Activated B cell treated with CpG ODN at 0.5 μM for 24 hours (primary cell): ENCODE measurements at regions of chr2 and their contacts with region 1.

Region 1: DNA sequence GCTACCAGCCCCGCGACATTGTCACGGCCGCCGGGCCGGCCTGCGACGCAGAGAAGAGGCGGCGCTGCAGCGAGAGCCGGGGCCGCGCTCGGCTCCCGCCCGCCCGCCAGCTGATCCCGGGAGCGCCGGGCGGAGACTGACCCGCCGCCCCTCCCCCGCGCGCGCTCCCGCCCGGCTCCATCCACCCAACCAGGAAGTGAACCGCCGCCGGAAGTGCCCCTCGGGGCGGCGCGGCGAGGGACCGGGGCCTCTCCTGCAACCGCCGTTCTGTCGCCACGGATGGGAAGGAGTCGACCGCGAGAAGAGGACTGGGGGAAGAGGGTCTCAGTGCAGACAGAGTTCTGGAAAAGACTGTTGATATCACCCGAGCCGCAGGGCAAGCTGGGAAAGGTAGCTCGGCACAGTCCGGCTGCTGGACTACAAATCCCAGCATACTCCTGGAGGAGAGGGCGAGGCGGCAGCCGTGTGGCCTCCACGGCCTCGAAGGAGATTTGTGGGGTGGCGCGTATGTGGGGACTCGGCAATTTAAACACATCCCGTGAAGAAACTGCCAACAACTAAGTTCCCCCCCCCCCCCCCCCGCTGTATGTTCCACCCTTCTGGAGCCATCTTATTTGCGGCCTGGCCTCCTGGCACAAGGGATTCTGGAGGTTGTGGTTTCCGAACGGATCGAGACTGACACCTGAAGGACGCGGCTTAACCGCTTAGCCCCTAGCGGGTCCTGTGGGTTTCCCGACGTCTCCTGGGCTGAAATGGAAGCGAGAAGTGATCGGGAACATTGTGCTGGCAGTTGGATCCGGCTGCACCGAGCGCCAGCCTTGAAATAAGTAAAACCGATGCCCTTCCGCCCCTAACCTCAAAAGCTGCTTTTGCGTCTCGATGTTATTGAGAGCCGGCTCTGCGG is at the start of gene AAK1:
- DNase-seq: peak; percentile 85
- ATAC-seq: peak; percentile 70
- H3K4me3 Mint-ChIP-seq: peak within 1 kb of the TSS; percentile 97
- H3K27ac Mint-ChIP-seq: peak within 1 kb of the TSS; percentile 91
- H3K4me1 Mint-ChIP-seq: peaks cover 45% of the 10 kb centered on the region
- H3K27me3 Mint-ChIP-seq: peaks cover 64% of the 10 kb centered on the region
- CTCF ChIP-seq: no peak
- total RNA-seq, gene AAK1: 4.7 and 5.6 TPM in 2 replicates

Region 2: GRCh38 chr2:68330691-68331090 is 1313.2 kb before region 1 on chr2:
- CTCF ChIA-PET with region 1: no interaction called
- POLR2A ChIA-PET with region 1: no interaction called
- intact Hi-C with region 1: no loop called
- DNase-seq: no peak
- ATAC-seq: no peak
- H3K4me3 Mint-ChIP-seq: no peak overlapping the region
- H3K27ac Mint-ChIP-seq: no peak overlapping the region
- H3K4me1 Mint-ChIP-seq: no peaks in the 10 kb centered on the region
- H3K27me3 Mint-ChIP-seq: peaks cover 10% of the 10 kb centered on the region
- CTCF ChIP-seq: no peak

Region 3: GRCh38 chr2:69375494-69376353 is 268.1 kb before region 1 on chr2:
- CTCF ChIA-PET with region 1: no interaction called
- POLR2A ChIA-PET with region 1: interaction called, 11 read pairs
- intact Hi-C with region 1: no loop called
- DNase-seq: no peak
- ATAC-seq: no peak
- H3K4me3 Mint-ChIP-seq: no peak overlapping the region
- H3K27ac Mint-ChIP-seq: no peak overlapping the region
- H3K4me1 Mint-ChIP-seq: peaks cover 8% of the 10 kb centered on the region
- H3K27me3 Mint-ChIP-seq: no peaks in the 10 kb centered on the region
- CTCF ChIP-seq: no peak

Region 4: GRCh38 chr2:69436938-69437750 is 206.7 kb before region 1 on chr2 and contains the start of gene NFU1:
- CTCF ChIA-PET with region 1: no interaction called
- POLR2A ChIA-PET with region 1: interaction called, 25 read pairs
- intact Hi-C with region 1: loop called (anchors 2 kb)
- DNase-seq: peak; percentile 85
- ATAC-seq: peak; percentile 95
- H3K4me3 Mint-ChIP-seq: peak within 1 kb of the TSS; percentile 96
- H3K27ac Mint-ChIP-seq: peak within 1 kb of the TSS; percentile 93
- H3K4me1 Mint-ChIP-seq: peaks cover 34% of the 10 kb centered on the region
- H3K27me3 Mint-ChIP-seq: no peaks in the 10 kb centered on the region
- CTCF ChIP-seq: no peak
- total RNA-seq, gene NFU1: 24.3 and 31.1 TPM in 2 replicates

Region 5: DNA sequence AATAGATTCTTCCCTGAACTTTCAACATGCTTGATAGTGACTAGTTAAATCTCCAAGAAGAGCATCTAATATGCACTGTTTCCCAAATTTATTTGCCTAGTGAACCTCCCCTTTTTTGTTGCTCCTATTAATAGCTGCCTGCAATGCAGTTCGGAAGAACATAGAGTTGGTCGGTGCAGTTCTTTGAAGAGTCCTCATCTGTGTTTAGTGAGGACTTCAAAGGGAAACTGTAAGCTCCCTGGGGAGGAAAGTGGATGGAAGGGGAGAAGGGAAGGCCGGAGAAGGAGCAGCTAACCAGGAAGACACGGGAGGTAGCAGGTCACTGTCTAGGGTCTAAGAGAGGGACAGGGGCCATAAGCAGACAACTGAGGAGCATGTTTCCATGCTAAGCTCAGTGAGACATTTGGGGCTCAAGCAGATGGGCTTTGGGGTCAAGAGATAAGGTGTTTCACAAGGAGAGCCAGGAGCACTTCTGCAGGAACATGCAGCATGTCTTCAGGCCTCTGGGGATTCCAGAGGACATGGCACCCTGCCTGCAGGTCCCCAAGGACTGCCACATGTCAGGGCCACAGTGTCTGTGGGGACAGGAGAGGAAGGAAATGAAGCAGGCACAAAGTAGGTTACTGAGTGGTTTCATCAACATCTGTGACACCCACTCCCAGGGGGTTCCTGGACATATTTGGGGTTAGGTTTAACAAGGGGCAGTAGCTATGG is 49.4 kb after region 1 on chr2:
- CTCF ChIA-PET with region 1: no interaction called
- POLR2A ChIA-PET with region 1: interaction called, 5 read pairs
- intact Hi-C with region 1: loop called (anchors 1 kb)
- DNase-seq: peak; percentile 54
- ATAC-seq: peak; percentile 94
- H3K4me3 Mint-ChIP-seq: peak overlapping the region; percentile 33
- H3K27ac Mint-ChIP-seq: peak overlapping the region; percentile 57
- H3K4me1 Mint-ChIP-seq: peaks cover 28% of the 10 kb centered on the region
- H3K27me3 Mint-ChIP-seq: peaks cover 41% of the 10 kb centered on the region
- CTCF ChIP-seq: no peak

Region 6: DNA sequence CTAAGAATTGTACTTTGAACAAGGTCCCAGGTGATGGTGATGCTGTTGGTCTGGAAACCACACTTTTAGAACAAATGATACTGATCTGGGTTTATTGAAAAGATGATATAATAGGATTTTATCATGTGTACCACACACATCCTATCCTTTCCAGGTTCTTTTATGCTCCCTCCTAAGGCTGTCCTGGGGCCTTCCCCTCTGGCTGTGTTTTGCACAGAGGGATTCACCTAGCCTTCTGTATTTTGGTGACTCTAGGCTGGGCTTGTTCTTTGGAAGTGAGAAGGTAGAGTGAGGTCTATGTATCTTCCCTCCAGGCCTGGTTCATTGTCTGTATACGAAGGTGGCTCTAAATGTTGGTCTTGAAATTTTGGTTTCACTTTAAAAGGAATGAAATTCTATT is 110.8 kb after region 1 on chr2:
- CTCF ChIA-PET with region 1: no interaction called
- POLR2A ChIA-PET with region 1: no interaction called
- intact Hi-C with region 1: no loop called
- DNase-seq: no peak
- ATAC-seq: no peak
- H3K4me3 Mint-ChIP-seq: no peak overlapping the region
- H3K27ac Mint-ChIP-seq: no peak overlapping the region
- H3K4me1 Mint-ChIP-seq: peaks cover 23% of the 10 kb centered on the region
- H3K27me3 Mint-ChIP-seq: no peaks in the 10 kb centered on the region
- CTCF ChIP-seq: no peak

Region 7: DNA sequence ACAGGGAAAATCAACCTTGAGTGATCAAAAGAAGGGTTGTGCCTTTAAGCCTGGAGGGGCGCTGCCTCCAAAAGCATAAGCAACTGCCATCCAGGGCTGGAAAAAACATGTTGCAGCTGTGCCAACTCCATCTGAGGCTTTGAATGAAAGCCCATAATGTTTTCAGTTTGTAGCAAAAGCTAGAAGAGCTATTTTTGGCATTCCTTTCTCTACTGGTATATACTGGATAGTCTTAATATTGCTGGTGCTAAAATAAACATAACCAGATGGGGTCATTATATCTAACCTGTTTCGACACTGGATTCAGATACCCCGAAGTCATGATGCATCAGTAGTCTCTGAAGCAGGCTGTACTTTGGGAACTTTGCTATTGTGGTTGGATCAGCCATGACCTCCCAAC is 123.2 kb after region 1 on chr2:
- CTCF ChIA-PET with region 1: no interaction called
- POLR2A ChIA-PET with region 1: no interaction called
- intact Hi-C with region 1: no loop called
- DNase-seq: no peak
- ATAC-seq: no peak
- H3K4me3 Mint-ChIP-seq: no peak overlapping the region
- H3K27ac Mint-ChIP-seq: no peak overlapping the region
- H3K4me1 Mint-ChIP-seq: peaks cover 73% of the 10 kb centered on the region
- H3K27me3 Mint-ChIP-seq: no peaks in the 10 kb centered on the region
- CTCF ChIP-seq: no peak

Region 8: DNA sequence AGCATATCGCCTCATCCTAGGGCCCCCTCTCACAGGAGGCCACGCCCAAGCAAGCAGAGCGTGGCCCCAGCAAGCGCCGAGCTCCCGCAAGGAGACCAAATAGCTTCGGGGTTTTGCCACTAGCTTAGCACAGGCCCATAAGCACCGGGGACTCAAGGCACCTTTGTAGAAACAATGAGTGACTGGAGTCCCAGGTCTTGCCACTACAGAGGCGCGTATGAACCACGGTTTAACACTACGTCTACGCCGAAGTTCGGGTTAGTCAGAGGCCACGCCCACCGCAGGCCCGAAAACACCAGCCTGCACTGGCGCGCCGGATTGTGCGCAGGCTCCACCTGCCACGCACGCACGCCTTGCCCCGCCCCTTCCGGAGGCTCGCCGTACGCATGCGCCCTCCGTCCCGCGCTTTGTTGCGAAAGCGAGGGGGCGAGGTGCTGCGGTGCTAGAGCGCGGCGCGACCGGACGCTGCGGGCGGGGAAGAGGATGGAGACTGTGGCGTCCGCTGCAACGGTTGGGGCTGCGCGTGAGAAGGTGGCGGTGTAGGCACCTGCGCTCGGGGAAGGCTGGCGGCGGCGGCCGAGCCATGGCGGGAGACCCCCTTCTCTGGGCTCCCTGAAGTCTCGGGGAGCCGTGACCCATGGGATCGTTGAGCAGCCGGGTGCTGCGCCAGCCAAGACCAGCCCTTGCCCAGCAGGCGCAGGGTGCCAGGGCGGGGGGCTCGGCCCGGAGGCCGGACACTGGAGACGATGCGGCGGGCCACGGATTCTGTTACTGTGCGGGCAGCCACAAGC is 185.6 kb after region 1 on chr2 and contains the start of gene GMCL1:
- CTCF ChIA-PET with region 1: no interaction called
- POLR2A ChIA-PET with region 1: no interaction called
- intact Hi-C with region 1: loop called (anchors 1 kb)
- DNase-seq: peak; percentile 99
- ATAC-seq: peak; percentile 95
- H3K4me3 Mint-ChIP-seq: peak within 1 kb of the TSS; percentile 94
- H3K27ac Mint-ChIP-seq: peak within 1 kb of the TSS; percentile 96
- H3K4me1 Mint-ChIP-seq: peaks cover 29% of the 10 kb centered on the region
- H3K27me3 Mint-ChIP-seq: no peaks in the 10 kb centered on the region
- CTCF ChIP-seq: no peak
- total RNA-seq, gene GMCL1: 8.0 and 13.0 TPM in 2 replicates

Region 9: DNA sequence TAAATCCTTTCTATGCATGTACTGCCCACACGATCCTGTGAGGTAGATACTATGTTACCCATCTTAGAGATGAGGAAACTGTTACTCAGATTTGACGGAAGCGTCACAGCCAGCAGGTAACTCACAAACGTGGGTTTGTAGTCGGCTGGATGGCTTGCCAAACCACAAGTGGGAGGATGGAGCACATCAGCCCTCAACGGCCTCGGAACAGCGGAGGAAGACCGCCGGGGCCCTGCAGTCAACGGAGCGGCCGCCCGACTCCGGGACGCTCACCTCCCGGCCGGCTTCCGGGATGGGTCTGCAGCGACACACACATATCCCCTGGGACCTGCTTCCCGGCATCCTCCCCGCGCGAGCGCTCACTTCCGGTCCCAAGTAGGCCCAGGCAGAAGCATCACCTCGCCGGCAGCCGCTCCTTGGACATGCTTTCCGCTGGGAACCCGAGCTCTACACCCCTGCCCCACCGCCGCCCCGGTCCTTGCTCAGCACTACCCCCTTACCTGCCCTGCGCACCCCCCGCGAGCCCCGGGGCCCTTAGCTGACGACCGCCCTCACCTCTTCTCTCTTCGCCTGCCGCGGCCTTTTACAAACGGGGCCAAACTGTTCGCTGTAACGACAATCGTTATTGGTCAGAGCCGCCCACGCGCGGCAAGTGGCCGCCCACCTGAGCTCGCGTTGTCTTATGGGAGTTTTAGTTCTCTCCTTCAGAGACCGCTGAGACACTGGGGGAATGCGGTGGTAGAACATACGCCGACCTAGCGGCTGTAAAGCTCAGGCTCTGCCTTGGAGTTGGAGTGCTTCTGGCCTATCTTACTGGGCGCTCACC is 546.8 kb after region 1 on chr2 and contains the start of gene C2orf42:
- CTCF ChIA-PET with region 1: no interaction called
- POLR2A ChIA-PET with region 1: no interaction called
- intact Hi-C with region 1: loop called (anchors 1 kb)
- DNase-seq: peak; percentile 93
- ATAC-seq: peak; percentile 86
- H3K4me3 Mint-ChIP-seq: peak within 1 kb of the TSS; percentile 98
- H3K27ac Mint-ChIP-seq: peak within 1 kb of the TSS; percentile 100
- H3K4me1 Mint-ChIP-seq: peaks cover 17% of the 10 kb centered on the region
- H3K27me3 Mint-ChIP-seq: no peaks in the 10 kb centered on the region
- CTCF ChIP-seq: no peak
- total RNA-seq, gene C2orf42: 28.4 and 34.8 TPM in 2 replicates

Region 10: DNA sequence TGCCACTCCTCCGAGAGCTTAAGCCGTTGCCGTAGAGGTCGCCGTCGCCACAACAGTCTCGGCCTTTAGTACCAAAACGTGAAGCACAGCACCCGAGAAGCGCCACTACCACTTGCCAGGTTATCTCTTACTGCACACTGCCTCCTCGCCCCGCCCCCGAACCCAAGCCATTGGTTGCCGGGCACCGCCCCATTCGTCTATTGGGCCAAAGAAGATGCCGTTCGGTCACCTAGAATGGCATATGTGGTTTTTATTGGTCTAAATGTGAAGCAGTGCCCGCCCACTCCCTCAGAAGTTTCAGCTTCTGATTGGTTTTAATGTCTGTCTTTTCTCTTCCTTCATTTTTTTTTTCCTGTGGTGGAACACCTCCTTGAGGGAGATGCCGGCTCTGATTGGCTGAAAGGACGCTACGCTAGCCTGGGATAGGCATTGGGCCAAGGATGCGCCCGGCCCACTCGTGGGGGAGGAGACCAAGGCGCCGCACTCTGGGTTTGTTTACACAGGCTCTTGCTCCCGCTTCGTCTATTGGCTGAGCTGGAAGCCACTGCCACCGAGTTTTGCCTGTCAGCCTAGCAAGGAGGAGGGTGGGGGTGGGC is 1583.2 kb after region 1 on chr2 and contains the start of gene PAIP2B:
- CTCF ChIA-PET with region 1: interaction called, 3 read pairs
- POLR2A ChIA-PET with region 1: no interaction called
- intact Hi-C with region 1: loop called (anchors 5 kb)
- DNase-seq: peak; percentile 89
- ATAC-seq: peak; percentile 92
- H3K4me3 Mint-ChIP-seq: peak within 1 kb of the TSS; percentile 99
- H3K27ac Mint-ChIP-seq: peak within 1 kb of the TSS; percentile 95
- H3K4me1 Mint-ChIP-seq: peaks cover 28% of the 10 kb centered on the region
- H3K27me3 Mint-ChIP-seq: peaks cover 9% of the 10 kb centered on the region
- CTCF ChIP-seq: no peak
- total RNA-seq, gene PAIP2B: 3.7 and 4.0 TPM in 2 replicates